ENCODE measurements at regions of chr5 and their contacts with region 1.

Region 1: DNA sequence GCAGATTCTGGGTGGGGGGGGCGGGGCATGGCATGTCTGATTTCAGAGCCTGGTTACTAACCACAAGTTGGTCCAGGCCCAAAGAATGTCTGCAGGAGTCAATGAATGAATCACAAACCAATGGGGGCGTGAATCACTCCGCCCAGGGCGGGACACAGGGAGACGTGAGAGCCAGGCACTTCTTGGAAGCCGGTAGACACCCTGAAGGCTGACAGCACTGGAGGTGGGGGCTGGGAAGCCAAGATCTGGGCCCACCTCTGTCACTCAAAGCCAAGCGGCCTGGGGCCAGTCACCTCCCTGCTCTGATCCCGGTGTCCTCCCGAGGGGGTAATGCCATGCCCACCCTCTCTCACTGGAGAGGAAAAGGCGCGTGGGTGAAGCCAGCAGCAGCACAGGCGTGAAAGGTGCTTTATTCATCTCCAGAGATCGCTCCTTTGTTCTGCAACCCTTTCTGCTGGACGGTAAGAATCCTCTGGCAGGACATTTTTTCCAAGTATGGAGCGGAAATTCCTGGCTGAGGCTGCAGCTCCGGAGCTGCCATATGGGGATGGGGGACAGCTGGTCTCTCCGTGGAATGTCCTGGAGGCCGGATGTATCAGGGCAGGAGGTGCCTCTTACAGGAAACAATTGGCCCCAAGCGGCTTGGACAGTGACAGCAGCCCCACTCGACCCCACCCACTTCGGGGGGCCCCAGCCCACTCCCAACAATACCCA is 85.0 kb downstream of the STK10 start:
- DNase-seq: peak; percentile 67 to 88
- H3K4me3 ChIP-seq: no peak overlapping the region
- H3K27ac ChIP-seq: peak overlapping the region in 4 of 5 donors; percentile 64 to 77 (median 70)
- H3K4me1 ChIP-seq: peaks cover 20 to 47% (median 33%) of the 10 kb centered on the region in 4 donors
- H3K27me3 ChIP-seq: no peaks in the 10 kb centered on the region
- CTCF ChIP-seq: no peak
- EP300 ChIP-seq: no peak
- POLR2A ChIP-seq: no peak

Region 2: GRCh38 chr5:172194985-172195774 is 92.1 kb after region 1 on chr5:
- intact Hi-C with region 1: loop called (anchors 5 kb)
- DNase-seq: no peak
- H3K4me3 ChIP-seq: no peak overlapping the region
- H3K27ac ChIP-seq: no peak overlapping the region
- H3K4me1 ChIP-seq: peaks cover 0 to 4% (median 0%) of the 10 kb centered on the region in 4 donors
- H3K27me3 ChIP-seq: no peaks in the 10 kb centered on the region
- CTCF ChIP-seq: no peak
- EP300 ChIP-seq: no peak
- POLR2A ChIP-seq: no peak

Region 3: GRCh38 chr5:172299916-172300439 is 196.9 kb after region 1 on chr5:
- intact Hi-C with region 1: loop called (anchors 5 kb)
- DNase-seq: no peak
- H3K4me3 ChIP-seq: no peak overlapping the region
- H3K27ac ChIP-seq: no peak overlapping the region
- H3K4me1 ChIP-seq: no peaks in the 10 kb centered on the region
- H3K27me3 ChIP-seq: no peaks in the 10 kb centered on the region
- CTCF ChIP-seq: no peak
- EP300 ChIP-seq: no peak
- POLR2A ChIP-seq: no peak

Measured in stomach (tissue), 19 donors.